Tibial artery (tissue), 4 donors: ENCODE measurements at regions of chr10 and their contacts with region 1.

Region 1: GRCh38 chr10:53469383-53469782 is 696.8 kb upstream of the MBL2 start:
- DNase-seq: no peak
- H3K4me3 ChIP-seq: no peak overlapping the region
- H3K27ac ChIP-seq: no peak overlapping the region
- H3K4me1 ChIP-seq: no peaks in the 10 kb centered on the region
- H3K27me3 ChIP-seq: no peaks in the 10 kb centered on the region
- CTCF ChIP-seq: no peak

Region 2: GRCh38 chr10:53601260-53601875 is 132.0 kb after region 1 on chr10:
- intact Hi-C with region 1: no loop called
- DNase-seq: no peak
- H3K4me3 ChIP-seq: no peak overlapping the region
- H3K27ac ChIP-seq: no peak overlapping the region
- H3K4me1 ChIP-seq: no peaks in the 10 kb centered on the region
- H3K27me3 ChIP-seq: no peaks in the 10 kb centered on the region
- CTCF ChIP-seq: peak; percentile 42 to 56

Region 3: DNA sequence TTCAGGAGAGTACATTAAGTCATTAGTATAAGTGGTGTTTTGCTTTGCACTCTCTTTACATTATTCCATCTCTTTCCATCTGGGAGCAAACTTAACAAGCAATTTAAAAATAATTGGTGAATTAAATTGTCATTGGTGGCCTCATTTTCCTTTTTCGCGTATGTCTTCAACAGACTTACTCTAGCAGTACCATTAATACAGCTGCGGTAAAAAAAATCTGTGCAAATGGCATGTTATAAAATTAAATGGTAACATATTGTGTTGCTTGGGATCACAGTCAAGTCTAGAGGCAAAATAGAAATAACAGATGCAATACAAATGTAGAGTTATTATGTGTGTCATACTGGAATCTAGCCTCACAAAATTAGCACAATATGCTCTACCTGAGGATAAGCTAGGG is 1009.2 kb after region 1 on chr10:
- intact Hi-C with region 1: loop called (anchors 5 kb)
- DNase-seq: no peak
- H3K4me3 ChIP-seq: no peak overlapping the region
- H3K27ac ChIP-seq: no peak overlapping the region
- H3K4me1 ChIP-seq: no peaks in the 10 kb centered on the region
- H3K27me3 ChIP-seq: no peaks in the 10 kb centered on the region
- CTCF ChIP-seq: no peak